Mammary epithelial cell (primary cell): ENCODE measurements at regions of chr5 and their contacts with region 1.

Region 1: GRCh38 chr5:124748687-124749594 is 2.5 kb upstream of the ZNF608 start:
- DNase-seq: peak; percentile 94
- H3K4me3 ChIP-seq: peak overlapping the region; percentile 71 to 75 (median 75)
- H3K27ac ChIP-seq: peak overlapping the region; percentile 92
- H3K4me1 ChIP-seq: peaks cover 22% of the 10 kb centered on the region
- H3K27me3 ChIP-seq: no peaks in the 10 kb centered on the region
- CTCF ChIP-seq: peak in 1 of 2 donors; percentile 3

Region 2: GRCh38 chr5:124310453-124310852 is 438.5 kb before region 1 on chr5:
- CTCF ChIA-PET with region 1: no interaction called
- dilution Hi-C with region 1: no loop called
- in situ Hi-C with region 1: no loop called
- intact Hi-C with region 1: no loop called
- DNase-seq: no peak
- H3K4me3 ChIP-seq: no peak overlapping the region
- H3K27ac ChIP-seq: no peak overlapping the region
- H3K4me1 ChIP-seq: no peaks in the 10 kb centered on the region
- H3K27me3 ChIP-seq: no peaks in the 10 kb centered on the region
- CTCF ChIP-seq: no peak

Region 3: DNA sequence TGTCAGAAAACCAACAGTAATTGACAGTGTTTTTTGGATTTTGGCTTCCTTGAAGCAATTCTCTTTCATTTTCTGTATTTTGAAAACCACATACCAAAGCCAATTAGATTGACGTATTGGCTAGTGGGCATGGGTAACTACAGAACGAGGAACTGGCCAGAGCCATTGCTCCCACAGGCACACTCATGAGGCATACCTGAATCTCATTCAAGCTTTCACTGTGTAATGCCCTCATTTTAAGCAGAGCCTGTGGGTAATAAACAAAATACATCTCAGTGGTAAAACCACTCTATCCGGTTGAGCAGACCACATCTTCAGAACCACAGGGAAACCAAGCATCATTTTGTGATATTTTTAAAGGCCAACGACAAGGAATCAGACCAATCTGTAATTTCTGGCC is 396.6 kb before region 1 on chr5:
- CTCF ChIA-PET with region 1: no interaction called
- dilution Hi-C with region 1: no loop called
- in situ Hi-C with region 1: no loop called
- intact Hi-C with region 1: no loop called
- DNase-seq: no peak
- H3K4me3 ChIP-seq: no peak overlapping the region
- H3K27ac ChIP-seq: no peak overlapping the region
- H3K4me1 ChIP-seq: peaks cover 9% of the 10 kb centered on the region
- H3K27me3 ChIP-seq: no peaks in the 10 kb centered on the region
- CTCF ChIP-seq: no peak

Region 4: DNA sequence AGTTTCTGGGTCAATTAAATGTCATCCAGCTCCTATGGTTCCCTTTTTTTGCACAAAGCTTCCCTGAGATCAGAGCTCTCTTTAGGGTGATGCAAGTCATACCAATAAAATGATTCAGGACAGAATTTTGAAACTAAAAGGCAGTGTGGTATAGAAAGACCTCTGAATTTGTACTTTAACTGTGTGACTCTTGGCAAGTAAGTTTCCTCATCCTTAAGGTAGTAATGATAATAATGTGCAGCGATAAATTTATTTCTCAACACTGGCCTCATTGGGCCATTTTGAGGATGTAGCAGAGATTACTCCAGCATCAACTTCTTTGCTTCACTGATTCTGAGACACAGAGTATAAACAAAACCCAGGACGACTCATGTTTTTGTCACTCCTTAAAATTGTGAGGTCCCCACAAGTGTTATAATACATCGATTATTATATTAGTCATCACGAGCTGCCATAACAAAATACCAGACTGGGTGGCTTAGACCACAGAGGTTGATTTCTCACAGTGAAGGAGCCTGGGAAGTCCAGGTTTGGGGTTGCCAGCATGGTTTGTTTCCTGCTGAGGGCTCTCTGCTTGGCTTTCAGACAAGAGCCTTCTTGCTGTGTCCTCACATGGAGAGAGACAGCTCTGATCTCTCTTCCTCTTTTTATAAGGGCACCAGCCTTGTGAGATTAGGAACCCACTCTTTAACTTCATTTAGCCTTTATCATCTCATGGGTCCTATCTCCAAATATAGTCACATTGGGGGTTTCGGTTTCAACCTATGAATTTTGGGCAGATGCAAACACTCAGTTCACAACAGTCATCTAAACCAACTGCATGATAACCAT is 295.5 kb before region 1 on chr5:
- CTCF ChIA-PET with region 1: no interaction called
- dilution Hi-C with region 1: no loop called
- in situ Hi-C with region 1: no loop called
- intact Hi-C with region 1: loop called (anchors 5 kb)
- DNase-seq: peak; percentile 78
- H3K4me3 ChIP-seq: no peak overlapping the region
- H3K27ac ChIP-seq: no peak overlapping the region
- H3K4me1 ChIP-seq: peaks cover 6% of the 10 kb centered on the region
- H3K27me3 ChIP-seq: no peaks in the 10 kb centered on the region
- CTCF ChIP-seq: no peak

Region 5: DNA sequence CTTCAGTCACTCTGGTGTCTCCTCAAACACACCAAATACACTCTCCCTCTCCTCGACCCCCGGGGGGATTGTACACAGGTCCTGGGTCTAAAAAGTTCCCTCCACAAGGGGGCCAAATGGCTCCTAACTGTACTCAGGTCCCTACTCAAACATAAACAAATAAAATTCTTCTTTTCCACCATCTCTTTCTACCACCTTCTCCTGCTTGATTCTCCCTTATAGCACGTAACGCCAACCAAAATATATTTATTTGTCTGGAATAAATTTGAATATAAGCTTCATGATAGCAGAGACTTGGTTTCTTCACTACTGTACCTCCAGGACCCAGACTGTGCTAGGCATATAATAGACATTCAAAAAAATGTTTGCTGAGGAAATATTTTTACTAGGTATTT is 23.9 kb before region 1 on chr5:
- CTCF ChIA-PET with region 1: no interaction called
- dilution Hi-C with region 1: no loop called
- in situ Hi-C with region 1: no loop called
- intact Hi-C with region 1: no loop called
- DNase-seq: no peak
- H3K4me3 ChIP-seq: no peak overlapping the region
- H3K27ac ChIP-seq: no peak overlapping the region
- H3K4me1 ChIP-seq: no peaks in the 10 kb centered on the region
- H3K27me3 ChIP-seq: no peaks in the 10 kb centered on the region
- CTCF ChIP-seq: no peak

Region 6: DNA sequence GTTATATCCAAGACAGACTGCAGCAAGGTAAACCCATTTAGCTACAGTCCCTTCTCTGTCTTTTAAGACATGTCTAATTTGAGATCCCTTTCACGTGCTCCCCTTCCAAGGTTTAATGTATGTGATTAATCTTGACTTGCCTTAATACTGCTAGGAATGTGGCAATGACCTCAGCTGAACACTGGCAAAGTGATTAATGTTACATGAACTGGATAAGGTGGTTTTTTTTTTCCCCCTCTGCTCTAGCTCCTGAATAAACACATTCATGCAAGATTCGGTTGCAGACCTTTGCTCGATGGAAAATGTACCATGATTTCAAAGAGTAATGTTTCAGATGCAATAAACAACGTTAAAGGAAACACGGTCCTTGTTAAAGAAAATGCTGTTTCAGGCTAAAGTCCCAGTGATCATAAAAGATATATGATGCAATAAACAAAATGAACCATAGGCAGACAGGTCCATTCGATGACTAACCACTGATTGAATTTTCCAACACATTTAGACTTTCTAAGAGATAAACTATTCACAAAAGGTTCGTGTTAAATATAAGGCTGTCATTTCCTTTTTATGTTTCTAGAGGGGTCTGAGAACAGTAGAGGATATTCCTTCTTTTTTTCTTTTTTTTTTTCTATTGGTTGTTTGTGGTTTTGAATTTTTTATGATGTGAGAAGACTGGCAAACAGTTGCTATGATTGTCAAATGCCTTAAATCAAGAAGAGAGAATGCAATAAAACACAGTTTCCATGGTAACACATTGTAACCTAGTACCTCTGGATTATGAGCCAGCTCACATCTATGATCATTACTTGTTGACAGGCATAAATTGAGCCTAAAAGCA is 42.2 kb after region 1 on chr5:
- CTCF ChIA-PET with region 1: no interaction called
- dilution Hi-C with region 1: no loop called
- in situ Hi-C with region 1: no loop called
- intact Hi-C with region 1: no loop called
- DNase-seq: peak; percentile 25
- H3K4me3 ChIP-seq: no peak overlapping the region
- H3K27ac ChIP-seq: no peak overlapping the region
- H3K4me1 ChIP-seq: peaks cover 11% of the 10 kb centered on the region
- H3K27me3 ChIP-seq: no peaks in the 10 kb centered on the region
- CTCF ChIP-seq: no peak

Region 7: DNA sequence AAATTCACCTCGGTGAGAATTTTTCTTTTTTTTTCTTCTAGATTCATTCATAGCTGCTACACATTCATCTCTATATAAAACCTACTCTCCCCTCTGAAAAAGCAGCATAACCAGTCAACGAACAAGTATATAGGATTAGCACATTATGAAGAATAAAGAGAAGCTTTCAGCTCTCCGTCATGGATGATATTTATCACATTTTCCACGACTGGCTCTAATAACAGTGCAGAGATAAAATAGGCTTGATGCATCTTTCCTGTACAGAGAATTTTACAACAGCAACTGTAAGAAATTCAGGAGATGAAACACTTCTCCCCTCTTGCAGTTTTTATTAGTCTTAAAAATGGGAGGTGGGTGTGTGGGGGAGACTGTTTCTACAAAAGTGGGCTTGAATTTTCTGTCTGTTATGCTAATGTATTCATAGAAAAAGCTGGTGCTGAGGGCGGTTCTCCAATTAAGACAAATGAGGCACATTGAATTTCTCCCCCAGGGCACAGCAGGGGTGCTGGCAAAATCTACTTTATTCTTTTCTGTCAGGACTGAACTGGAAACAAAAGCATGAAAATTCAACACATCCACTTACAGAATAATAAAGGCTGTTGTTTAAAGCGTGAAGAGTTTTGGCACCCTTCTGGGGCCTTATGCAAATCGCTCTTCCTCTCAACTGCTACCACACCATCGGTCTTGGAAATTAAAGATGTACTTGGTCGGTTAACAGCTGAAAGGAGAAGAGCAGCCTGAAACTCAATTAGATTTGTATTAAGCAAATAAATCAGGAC is 231.4 kb after region 1 on chr5:
- CTCF ChIA-PET with region 1: no interaction called
- dilution Hi-C with region 1: no loop called
- in situ Hi-C with region 1: no loop called
- intact Hi-C with region 1: loop called (anchors 10 kb)
- DNase-seq: no peak
- H3K4me3 ChIP-seq: no peak overlapping the region
- H3K27ac ChIP-seq: no peak overlapping the region
- H3K4me1 ChIP-seq: peaks cover 12% of the 10 kb centered on the region
- H3K27me3 ChIP-seq: no peaks in the 10 kb centered on the region
- CTCF ChIP-seq: no peak

Region 8: GRCh38 chr5:125129151-125129806 is 380.3 kb after region 1 on chr5:
- CTCF ChIA-PET with region 1: no interaction called
- dilution Hi-C with region 1: no loop called
- in situ Hi-C with region 1: no loop called
- intact Hi-C with region 1: loop called (anchors 2 kb)
- DNase-seq: peak; percentile 62
- H3K4me3 ChIP-seq: no peak overlapping the region
- H3K27ac ChIP-seq: no peak overlapping the region
- H3K4me1 ChIP-seq: peaks cover 11% of the 10 kb centered on the region
- H3K27me3 ChIP-seq: no peaks in the 10 kb centered on the region
- CTCF ChIP-seq: no peak

Region 9: DNA sequence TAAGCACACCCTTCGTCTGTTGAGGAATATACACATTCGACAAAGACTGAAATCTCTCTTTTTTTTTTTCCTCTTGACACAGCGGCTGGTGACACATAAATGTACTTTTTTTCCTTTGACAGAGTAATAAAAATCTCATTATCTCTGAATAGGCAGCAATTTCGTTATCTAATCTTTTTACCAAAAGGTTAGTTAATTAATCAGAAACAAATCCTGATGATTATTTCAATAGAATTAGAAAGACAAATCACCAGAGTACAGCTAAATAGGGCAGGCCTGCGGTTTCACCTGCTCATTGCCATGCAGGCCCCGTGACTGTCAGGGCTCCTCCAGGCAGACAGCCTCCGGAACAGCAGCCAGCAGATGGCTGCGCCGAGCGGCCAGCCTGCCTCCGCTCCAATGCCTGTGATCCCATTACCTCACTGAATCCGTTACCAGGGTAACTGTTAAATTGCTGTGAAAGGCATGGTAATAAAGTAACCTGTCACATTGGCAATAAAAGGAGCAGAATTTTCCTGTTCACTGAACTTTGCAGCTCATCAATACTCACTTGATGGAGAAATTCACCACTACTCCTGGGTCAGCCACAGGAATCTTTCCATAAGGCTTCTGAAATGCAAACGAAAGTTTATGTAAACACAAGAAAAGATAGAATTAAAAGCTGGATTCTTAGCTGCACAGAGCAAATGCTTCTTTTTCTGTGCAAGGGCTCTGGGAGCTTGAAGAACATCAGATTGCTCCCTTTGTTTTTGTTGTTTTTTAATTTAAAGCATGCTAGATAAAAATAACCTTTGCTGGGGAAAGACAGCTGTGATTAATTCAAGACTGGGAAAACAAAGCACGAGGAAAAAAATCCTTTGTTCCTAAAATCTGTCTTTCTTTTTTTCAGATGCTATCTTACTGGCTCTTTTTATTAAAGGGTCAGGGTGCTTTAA is 663.9 kb after region 1 on chr5:
- CTCF ChIA-PET with region 1: interaction called, 5 read pairs
- dilution Hi-C with region 1: no loop called
- in situ Hi-C with region 1: loop called in 1 of 2 experiments (anchors 25 kb)
- intact Hi-C with region 1: loop called (anchors 1 kb)
- DNase-seq: peak; percentile 84
- H3K4me3 ChIP-seq: no peak overlapping the region
- H3K27ac ChIP-seq: peak overlapping the region; percentile 99
- H3K4me1 ChIP-seq: peaks cover 50% of the 10 kb centered on the region
- H3K27me3 ChIP-seq: no peaks in the 10 kb centered on the region
- CTCF ChIP-seq: peak; percentile 41 to 75